Heart left ventricle (tissue), 16 donors: ENCODE measurements at regions of chr9 and their contacts with region 1.

Region 1: DNA sequence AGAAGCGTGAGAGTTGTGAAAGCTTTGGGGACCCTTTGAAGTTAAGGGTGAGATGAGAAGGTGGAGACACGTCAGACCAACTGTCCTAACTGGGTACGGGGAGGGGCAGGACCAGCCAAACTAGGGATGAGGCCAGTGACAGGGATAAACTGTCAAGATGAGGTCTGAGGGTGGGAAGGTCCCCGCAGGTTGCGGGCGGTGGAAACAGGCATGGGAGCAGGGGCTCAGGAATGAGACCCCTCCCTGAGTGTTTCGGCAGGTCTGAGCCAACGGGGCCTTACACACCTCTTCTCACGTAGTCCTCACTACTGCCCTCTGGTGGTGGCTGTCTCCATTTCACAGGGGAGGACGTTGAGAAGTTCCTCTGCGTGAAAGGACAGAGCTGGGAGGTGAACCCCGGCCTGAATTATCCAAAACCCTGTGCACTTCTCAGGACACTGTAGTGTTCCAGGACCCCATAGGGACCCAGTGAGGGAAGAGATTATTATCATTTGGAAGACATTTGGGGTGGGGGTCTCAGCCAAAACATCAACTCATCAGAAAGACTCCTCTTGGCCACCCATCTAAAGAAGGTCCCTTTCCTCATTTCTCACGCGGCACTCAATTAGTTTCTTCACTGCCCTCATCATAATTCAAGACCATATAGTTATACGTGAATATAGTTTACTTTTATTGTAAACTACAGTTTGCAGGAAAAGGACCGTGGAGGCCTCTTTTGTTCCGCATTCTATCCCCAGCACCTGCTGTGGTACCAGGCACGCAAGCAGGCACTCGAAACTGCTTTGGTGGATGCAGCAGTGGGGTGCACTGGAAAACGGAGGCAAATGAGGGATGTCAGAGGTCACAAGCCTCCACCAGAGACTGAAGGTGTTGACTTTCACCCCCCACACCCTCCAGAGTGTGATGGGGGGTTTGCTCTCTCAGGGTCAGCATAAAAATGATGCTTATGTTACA is 21.7 kb upstream of the NANS start:
- DNase-seq: peak; percentile 81 to 88 (median 83)
- ATAC-seq: peak; percentile 70 to 91 (median 88)
- H3K4me3 ChIP-seq: peak overlapping the region in 6 of 12 donors; percentile 15 to 31 (median 30)
- H3K27ac ChIP-seq: no peak overlapping the region
- H3K4me1 ChIP-seq: peaks cover 0 to 22% (median 13%) of the 10 kb centered on the region in 12 donors
- H3K27me3 ChIP-seq: no peaks in the 10 kb centered on the region
- CTCF ChIP-seq: peak; percentile 72 to 92 (median 86)
- POLR2A ChIP-seq: no peak

Region 2: DNA sequence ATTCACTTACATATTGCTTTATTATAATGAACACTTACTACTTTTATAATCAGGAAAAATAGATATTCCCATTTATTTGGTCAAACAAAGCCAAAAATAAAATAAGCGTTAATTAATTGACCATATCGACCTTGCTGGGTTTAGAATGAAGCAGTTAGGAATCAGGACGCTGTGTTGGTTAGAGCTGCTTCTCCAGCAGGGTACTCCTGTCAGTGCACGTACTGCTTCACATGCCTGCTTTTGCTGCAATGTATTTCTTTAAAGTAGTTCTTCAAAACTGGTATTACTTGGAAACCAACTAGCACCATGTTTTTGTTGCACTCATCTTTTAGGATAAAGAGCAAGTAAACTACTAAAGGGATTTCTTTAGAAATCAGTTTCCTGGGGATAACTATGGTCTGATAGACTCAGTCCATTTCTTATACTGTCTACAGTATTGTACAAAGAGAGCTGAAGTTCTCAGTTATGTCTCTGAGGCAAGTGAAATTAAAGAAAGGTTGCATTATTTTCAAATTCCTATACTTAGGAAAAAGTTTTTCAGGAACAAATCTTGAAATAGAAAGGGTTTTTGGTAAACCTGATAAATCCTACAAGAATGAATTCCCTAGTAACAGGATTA is 105.8 kb before region 1 on chr9:
- intact Hi-C with region 1: loop called in 7 of 10 experiments (anchors 1 to 5 kb)
- DNase-seq: no peak
- ATAC-seq: no peak
- H3K4me3 ChIP-seq: no peak overlapping the region
- H3K27ac ChIP-seq: no peak overlapping the region
- H3K4me1 ChIP-seq: peaks cover 0 to 2% (median 0%) of the 10 kb centered on the region in 12 donors
- H3K27me3 ChIP-seq: peaks cover 0 to 74% (median 3%) of the 10 kb centered on the region in 9 donors
- CTCF ChIP-seq: no peak
- POLR2A ChIP-seq: no peak

Region 3: GRCh38 chr9:97990266-97990665 is 44.6 kb before region 1 on chr9:
- intact Hi-C with region 1: loop called in 3 of 10 experiments (anchors 2 to 10 kb)
- DNase-seq: no peak
- ATAC-seq: peak in 1 of 4 donors; percentile 28
- H3K4me3 ChIP-seq: no peak overlapping the region
- H3K27ac ChIP-seq: peak overlapping the region in 1 of 12 donors; percentile 7
- H3K4me1 ChIP-seq: peaks cover 0 to 88% (median 41%) of the 10 kb centered on the region in 12 donors
- H3K27me3 ChIP-seq: no peaks in the 10 kb centered on the region
- CTCF ChIP-seq: no peak
- POLR2A ChIP-seq: no peak

Region 4: DNA sequence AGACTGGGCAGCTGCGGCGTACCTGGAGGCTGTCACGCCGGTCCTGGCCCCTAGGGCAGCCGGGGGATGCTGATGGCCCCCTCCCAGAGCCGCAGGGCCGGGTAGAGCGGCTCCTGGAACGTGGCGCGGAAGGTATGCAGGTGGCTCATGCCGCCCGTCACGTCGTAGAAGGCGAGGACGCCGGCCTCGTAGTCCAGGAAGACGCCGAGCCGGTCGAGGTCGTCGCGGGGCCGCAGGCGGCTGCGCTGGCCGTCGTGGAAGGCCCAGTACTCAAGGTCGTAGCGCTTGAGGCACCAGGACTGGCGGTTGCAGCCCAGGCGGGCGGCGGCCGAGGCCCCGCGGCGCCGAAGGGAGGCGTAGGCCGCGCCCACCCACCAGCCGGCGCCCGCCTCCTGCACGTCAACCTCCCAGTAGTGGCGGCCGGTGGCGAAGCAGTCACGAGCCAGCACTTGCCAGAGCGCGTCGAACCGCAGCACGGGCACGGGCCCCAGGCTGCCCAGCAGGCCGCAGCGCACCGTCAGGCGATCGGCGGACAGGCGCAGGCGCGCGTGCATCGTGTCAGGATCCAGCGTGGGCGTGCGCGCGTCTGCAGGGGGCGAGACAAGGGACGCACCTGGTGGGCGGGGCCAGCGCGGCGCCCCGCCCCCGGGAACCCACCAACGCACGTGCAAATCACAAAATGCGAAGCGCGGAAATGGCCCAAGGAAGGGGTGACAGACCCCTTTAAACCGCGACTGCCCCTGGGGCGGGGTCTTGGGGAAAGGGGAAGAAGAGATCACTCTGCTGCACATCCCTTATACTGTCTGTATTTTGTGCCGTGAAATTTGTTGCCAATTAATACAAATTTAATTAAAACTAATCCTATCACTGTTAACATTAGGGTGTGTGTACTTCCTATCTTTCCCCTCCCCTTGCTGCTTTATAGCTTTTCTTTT is 52.8 kb after region 1 on chr9:
- intact Hi-C with region 1: no loop called
- DNase-seq: peak; percentile 24 to 70 (median 39)
- ATAC-seq: peak in 3 of 4 donors; percentile 72 to 78 (median 77)
- H3K4me3 ChIP-seq: peak overlapping the region in 10 of 12 donors; percentile 10 to 60 (median 46)
- H3K27ac ChIP-seq: no peak overlapping the region
- H3K4me1 ChIP-seq: peaks cover 0 to 14% (median 4%) of the 10 kb centered on the region in 12 donors
- H3K27me3 ChIP-seq: peaks cover 0 to 27% (median 3%) of the 10 kb centered on the region in 9 donors
- CTCF ChIP-seq: no peak
- POLR2A ChIP-seq: no peak